ENCODE measurements at regions of chr2 and their contacts with region 1.

Region 1: DNA sequence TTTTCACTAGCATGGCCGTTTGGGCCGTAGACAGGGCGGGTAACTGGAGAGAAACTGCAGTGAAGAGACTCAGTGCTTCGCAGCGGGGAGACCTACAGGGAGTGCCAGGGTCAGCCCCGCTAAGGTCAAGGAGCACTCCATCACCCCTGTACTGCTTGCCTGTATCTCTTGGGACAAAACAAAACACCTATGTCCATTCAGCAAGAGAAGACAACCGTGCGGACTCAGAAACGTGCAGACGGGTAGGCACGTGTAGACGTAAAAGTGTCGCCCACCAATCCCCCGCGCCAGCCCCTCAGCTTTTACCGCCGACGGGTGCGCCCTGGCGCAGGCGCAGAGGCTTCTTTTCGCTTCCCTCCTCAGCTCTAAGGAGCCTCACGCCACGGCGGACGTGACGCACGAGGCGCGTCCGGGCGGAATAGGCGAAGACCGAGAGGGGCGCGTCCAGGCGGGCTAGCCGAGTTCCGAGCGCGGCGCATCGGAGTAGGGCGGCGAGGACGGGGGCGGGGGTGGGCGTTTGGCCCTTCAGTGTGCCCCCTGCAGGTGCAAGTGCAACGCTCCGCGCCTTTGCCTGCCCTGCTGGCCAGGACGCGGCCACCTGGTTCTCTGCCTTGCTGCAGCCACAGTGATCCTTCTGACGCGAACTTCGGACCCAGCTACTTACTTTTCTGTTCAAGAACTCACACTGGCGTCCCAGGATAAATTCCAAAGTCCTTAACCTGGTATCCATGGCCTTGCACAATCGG is 3.3 kb upstream of the SOS1 start:
- DNase-seq: peak; percentile 87 to 98 (median 95)
- ATAC-seq: peak; percentile 67 to 80 (median 70)
- H3K4me3 ChIP-seq: peak overlapping the region; percentile 77 to 94
- H3K4me3 Mint-ChIP-seq: peak overlapping the region; percentile 90 to 99 (median 93)
- H3K27ac ChIP-seq: peak overlapping the region; percentile 91
- H3K27ac Mint-ChIP-seq: peak overlapping the region; percentile 97 to 98
- H3K4me1 ChIP-seq: peaks cover 27 to 39% of the 10 kb centered on the region in 2 experiments
- H3K4me1 Mint-ChIP-seq: peaks cover 53 to 66% (median 65%) of the 10 kb centered on the region in 3 donors
- H3K27me3 ChIP-seq: no peaks in the 10 kb centered on the region
- H3K27me3 Mint-ChIP-seq: no peaks in the 10 kb centered on the region

Region 2: DNA sequence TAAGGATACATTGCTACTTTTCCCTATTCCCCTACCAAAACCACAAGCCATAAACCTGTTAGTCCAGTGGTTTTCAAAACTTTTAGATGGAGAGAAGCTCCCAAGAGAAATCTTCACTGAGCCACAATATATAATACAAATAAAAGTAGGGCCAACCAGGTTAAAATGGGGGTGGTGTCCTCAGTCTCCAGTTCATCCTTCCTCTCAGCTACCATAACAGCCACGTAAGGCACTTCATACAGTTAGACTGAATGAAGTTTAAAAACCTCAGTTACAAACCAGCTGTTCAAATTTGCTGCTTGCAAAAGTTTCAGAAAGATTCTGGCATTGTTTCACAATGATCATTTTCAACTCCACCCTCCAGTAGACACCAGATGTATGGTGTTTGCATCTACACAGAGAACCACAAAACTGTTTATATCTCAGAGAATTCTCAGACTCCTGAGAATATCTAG is 29.3 kb before region 1 on chr2:
- CTCF ChIA-PET with region 1: interaction called in 1 of 2 experiments, 11 read pairs
- POLR2A ChIA-PET with region 1: interaction called in 1 of 2 experiments, 3 read pairs
- DNase-seq: no peak
- ATAC-seq: no peak
- H3K4me3 ChIP-seq: no peak overlapping the region
- H3K4me3 Mint-ChIP-seq: peak overlapping the region in 1 of 3 donors; percentile 4
- H3K27ac ChIP-seq: no peak overlapping the region
- H3K27ac Mint-ChIP-seq: peak overlapping the region; percentile 8 to 72
- H3K4me1 ChIP-seq: peaks cover 3 to 9% of the 10 kb centered on the region in 2 experiments
- H3K4me1 Mint-ChIP-seq: peaks cover 70 to 74% (median 70%) of the 10 kb centered on the region in 3 donors
- H3K27me3 ChIP-seq: no peaks in the 10 kb centered on the region
- H3K27me3 Mint-ChIP-seq: no peaks in the 10 kb centered on the region

Region 3: DNA sequence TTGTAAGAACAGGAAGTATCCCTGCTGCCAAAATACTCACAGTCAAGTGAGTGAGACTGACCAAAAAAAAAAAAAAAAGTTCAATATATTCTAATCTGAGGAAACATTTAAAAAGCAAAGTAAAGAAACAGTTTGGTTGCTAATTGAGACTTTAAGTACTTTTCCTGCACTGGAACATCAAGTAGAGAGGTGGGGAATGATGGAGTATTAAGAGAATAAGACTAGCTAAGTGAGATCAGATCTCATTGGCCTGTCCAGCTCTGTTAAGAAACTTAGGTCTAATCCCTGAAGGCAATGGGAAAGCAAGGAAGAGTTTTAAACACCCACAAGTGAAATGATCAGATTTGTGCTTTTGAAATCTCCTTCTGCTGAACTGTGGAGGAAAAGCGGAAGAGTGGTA is 340.7 kb after region 1 on chr2:
- CTCF ChIA-PET with region 1: no interaction called
- POLR2A ChIA-PET with region 1: interaction called in 1 of 2 experiments, 14 read pairs
- DNase-seq: no peak
- ATAC-seq: no peak
- H3K4me3 ChIP-seq: no peak overlapping the region
- H3K4me3 Mint-ChIP-seq: no peak overlapping the region
- H3K27ac ChIP-seq: no peak overlapping the region
- H3K27ac Mint-ChIP-seq: no peak overlapping the region
- H3K4me1 ChIP-seq: no peaks in the 10 kb centered on the region
- H3K4me1 Mint-ChIP-seq: peaks cover 0 to 9% (median 6%) of the 10 kb centered on the region in 3 donors
- H3K27me3 ChIP-seq: no peaks in the 10 kb centered on the region
- H3K27me3 Mint-ChIP-seq: no peaks in the 10 kb centered on the region

Measured in T-cell (primary cell).